HCT116 (cell line): ENCODE measurements at regions of chr4 and their contacts with region 1.

Region 1: GRCh38 chr4:183261953-183262775 is 57.9 kb downstream of the CLDN22 start:
- DNase-seq: peak; percentile 56
- ATAC-seq: peak; percentile 97
- H3K4me3 ChIP-seq: no peak overlapping the region
- H3K27ac ChIP-seq: 0 out of 2 replicates have a peak overlapping the region, but pooled peaks have one; percentile 6
- H3K4me1 ChIP-seq: peaks cover 0 to 4% of the 10 kb centered on the region in 2 experiments; a peak in 2 of 4 replicates
- H3K27me3 ChIP-seq: no peaks in the 10 kb centered on the region
- CTCF ChIP-seq: peak; percentile 84 to 87 (median 86)
- POLR2A ChIP-seq: no peak
- RAD21 ChIP-seq: peak; percentile 82

Region 2: DNA sequence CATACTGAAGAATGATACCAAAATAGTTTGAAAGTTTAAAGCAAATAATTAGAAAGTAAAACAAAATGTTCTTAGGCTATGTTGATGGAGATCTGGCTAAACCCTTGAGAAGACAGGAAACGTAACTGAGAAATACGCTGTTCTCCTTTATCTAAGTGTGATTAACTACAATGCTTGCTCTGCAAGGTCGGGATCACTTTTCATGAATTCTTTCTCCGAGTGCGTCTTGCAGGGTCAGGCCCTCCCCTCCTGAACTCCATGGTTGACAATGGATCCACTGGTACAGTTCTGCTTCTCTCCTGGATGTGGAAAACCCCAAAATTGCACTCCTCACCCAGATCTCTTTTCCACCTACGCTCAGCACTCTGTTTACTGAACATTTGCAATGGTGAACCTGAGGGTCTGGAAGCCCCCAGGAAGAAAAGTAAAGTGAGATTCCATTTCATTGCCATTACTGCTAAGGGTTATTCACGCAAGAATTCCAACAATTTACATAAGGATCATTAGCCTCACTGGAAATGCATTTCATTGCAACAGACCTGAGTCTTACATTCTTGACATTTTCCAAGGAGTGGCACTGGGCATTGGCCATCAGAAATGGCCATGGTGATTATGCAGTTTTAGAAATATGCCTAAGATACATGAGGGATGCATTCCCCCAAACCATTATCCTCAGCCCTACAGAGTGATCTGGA is 187.7 kb before region 1 on chr4:
- CTCF ChIA-PET with region 1: interaction called, 47 read pairs
- POLR2A ChIA-PET with region 1: no interaction called
- RAD21 ChIA-PET with region 1: interaction called, 8 to 12 read pairs
- intact Hi-C with region 1: loop called (anchors 1 kb)
- DNase-seq: no peak
- ATAC-seq: no peak
- H3K4me3 ChIP-seq: no peak overlapping the region
- H3K27ac ChIP-seq: no peak overlapping the region
- H3K4me1 ChIP-seq: no peaks in the 10 kb centered on the region
- H3K27me3 ChIP-seq: no peaks in the 10 kb centered on the region
- CTCF ChIP-seq: no peak
- POLR2A ChIP-seq: no peak
- RAD21 ChIP-seq: no peak

Region 3: GRCh38 chr4:183249857-183250256 is 12.3 kb before region 1 on chr4:
- CTCF ChIA-PET with region 1: interaction called, 11 read pairs
- POLR2A ChIA-PET with region 1: no interaction called
- RAD21 ChIA-PET with region 1: interaction called in 1 of 2 experiments, 4 read pairs
- intact Hi-C with region 1: no loop called
- DNase-seq: no peak
- ATAC-seq: peak; percentile 76
- H3K4me3 ChIP-seq: no peak overlapping the region
- H3K27ac ChIP-seq: no peak overlapping the region
- H3K4me1 ChIP-seq: no peaks in the 10 kb centered on the region
- H3K27me3 ChIP-seq: no peaks in the 10 kb centered on the region
- CTCF ChIP-seq: peak; percentile 24 to 62 (median 53); a peak in 4 of 6 replicates
- POLR2A ChIP-seq: no peak
- RAD21 ChIP-seq: peak; percentile 75

Region 4: DNA sequence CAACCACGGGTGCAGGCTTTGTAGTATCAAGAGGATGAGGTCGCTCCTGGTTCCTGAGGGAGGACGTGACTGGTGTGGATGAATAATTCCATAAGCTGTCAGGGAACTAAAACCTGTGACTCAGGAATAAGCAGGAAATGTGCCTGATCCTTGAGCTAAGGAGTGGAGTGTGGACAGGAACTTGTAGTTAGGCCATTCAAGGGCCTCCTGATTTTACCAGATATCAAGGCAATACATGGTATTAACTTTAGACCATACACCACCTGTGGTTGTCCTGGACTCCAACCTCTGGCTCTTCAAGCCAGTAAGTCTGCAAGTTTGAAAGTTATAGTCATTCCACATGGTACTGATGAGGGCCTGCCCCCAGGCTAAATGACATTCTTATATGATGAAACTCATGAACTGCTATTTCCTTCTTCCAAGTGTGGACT is 230.6 kb after region 1 on chr4:
- CTCF ChIA-PET with region 1: no interaction called
- POLR2A ChIA-PET with region 1: no interaction called
- RAD21 ChIA-PET with region 1: no interaction called
- intact Hi-C with region 1: no loop called
- DNase-seq: no peak
- ATAC-seq: no peak
- H3K4me3 ChIP-seq: no peak overlapping the region
- H3K27ac ChIP-seq: no peak overlapping the region
- H3K4me1 ChIP-seq: peaks cover 0 to 11% of the 10 kb centered on the region in 2 experiments; a peak in 2 of 4 replicates
- H3K27me3 ChIP-seq: no peaks in the 10 kb centered on the region
- CTCF ChIP-seq: no peak
- POLR2A ChIP-seq: no peak
- RAD21 ChIP-seq: no peak

Region 5: GRCh38 chr4:184168406-184169019 is 906.3 kb after region 1 on chr4:
- CTCF ChIA-PET with region 1: no interaction called
- POLR2A ChIA-PET with region 1: no interaction called
- RAD21 ChIA-PET with region 1: no interaction called
- intact Hi-C with region 1: loop called (anchors 10 kb)
- DNase-seq: peak; percentile 22
- ATAC-seq: peak; percentile 97
- H3K4me3 ChIP-seq: no peak overlapping the region
- H3K27ac ChIP-seq: no peak overlapping the region
- H3K4me1 ChIP-seq: no peaks in the 10 kb centered on the region
- H3K27me3 ChIP-seq: no peaks in the 10 kb centered on the region
- CTCF ChIP-seq: peak; percentile 62 to 76 (median 66)
- POLR2A ChIP-seq: no peak
- RAD21 ChIP-seq: peak; percentile 71